Posterior cingulate gyrus (tissue), 11 donors: ENCODE measurements at regions of chr1 and their contacts with region 1.

Region 1: DNA sequence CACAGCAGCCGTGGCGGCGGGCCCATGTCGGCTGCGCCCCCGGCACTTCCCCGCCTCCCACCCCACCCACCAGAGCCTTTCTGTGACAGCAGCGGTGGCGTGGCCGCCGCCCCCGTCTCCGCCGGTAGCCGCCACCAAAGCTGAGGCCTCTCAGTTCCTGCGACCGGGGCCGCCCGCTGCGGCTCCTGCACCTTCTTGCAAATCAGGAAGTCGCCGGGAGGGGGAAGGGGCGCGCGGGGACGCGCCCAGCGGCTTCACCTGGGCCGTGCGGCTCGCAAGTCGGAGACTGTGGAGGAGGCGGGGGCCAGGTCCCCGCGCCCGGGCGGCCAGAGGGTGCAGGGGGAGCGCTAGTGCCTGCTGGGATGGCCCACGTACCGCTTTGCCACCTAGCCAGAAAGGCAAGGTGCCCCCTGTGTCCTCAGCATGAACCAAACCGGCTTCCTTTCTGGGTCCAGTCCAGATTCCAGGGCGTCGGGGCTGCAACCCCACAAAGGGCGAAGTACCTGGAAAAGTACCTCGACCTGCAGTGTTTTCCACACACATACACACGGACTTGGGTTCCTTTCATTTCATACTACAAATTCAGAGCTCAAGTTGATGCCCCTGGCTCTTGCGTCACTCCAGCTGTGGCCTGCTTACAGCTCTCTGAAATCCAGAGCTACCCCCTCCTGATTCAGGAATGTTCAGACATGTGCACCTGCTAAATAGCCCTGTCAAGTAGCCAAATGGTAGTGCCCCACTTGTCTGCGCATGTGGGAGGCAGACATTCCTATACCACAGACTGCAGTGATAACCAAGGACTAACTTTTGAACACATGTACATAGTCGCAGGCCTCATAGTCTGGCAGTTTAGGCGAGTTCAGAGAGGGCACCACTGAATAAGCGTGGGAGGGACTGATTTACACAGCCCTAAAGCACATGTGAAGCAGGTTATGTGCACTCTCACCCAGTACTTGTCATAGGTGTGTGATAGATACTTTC is at the start of gene DENND1B:
- DNase-seq: peak; percentile 20 to 93 (median 43)

Region 2: GRCh38 chr1:198157241-198157846 is 381.8 kb after region 1 on chr1:
- intact Hi-C with region 1: loop called (anchors 10 kb)
- DNase-seq: peak; percentile 84 to 98 (median 89)